Naive thymus-derived CD4-positive, alpha-beta T cell (primary cell): ENCODE measurements at regions of chr4 and their contacts with region 1.

Region 1: DNA sequence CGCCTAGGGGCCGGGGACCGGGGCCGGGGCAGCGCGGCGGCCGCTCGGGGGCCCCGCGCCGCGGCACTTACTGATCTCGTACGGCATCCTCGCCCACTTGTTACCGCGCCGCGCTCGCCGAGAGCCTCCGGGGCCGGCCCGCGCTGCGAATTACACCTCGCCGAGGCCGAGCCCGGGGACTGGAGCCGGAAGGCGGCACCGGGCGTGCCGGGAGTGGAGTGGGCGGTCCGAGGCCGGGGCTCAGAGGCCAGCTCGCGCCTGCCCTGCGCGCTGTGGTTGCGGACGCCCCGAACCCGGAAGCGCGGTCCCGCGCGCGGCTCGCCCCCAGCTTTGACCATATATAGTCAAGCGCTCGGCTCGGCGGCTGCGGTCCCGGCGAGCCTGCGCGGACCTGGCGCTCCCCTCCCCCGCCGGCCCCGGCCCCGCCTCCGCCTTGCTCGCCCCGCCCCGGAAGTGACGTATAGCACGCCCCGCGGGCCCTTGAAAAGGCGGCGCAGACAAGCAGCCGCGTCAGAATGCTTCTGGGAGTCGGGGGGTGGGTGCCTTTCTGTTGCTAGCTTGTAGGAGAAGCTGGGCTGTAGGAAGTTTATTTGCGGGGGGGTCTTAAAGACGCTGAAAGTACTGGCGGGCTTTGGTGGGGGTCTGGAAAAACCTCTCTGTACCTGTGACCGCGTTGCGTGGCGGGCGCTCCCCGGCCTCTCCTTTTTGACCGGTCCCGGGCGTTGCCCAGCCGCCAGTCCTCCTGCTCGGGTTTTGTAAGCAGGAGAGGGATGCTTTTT is at the start of gene WDR1:
- DNase-seq: peak; percentile 84 to 95 (median 91)
- ATAC-seq: peak; percentile 89
- H3K4me3 ChIP-seq: peak within 1 kb of the TSS; percentile 78
- H3K4me3 Mint-ChIP-seq: peak within 1 kb of the TSS; percentile 93 to 99 (median 97)
- H3K27ac ChIP-seq: peak within 1 kb of the TSS; percentile 97
- H3K27ac Mint-ChIP-seq: peak within 1 kb of the TSS; percentile 96 to 100 (median 99)
- H3K4me1 ChIP-seq: peaks cover 35 to 66% of the 10 kb centered on the region in 2 donors
- H3K4me1 Mint-ChIP-seq: peaks cover 60 to 92% (median 86%) of the 10 kb centered on the region in 7 donors
- H3K27me3 ChIP-seq: no peaks in the 10 kb centered on the region
- H3K27me3 Mint-ChIP-seq: no peaks in the 10 kb centered on the region
- total RNA-seq, gene WDR1: 242 to 470 (median 330) TPM

Region 2: DNA sequence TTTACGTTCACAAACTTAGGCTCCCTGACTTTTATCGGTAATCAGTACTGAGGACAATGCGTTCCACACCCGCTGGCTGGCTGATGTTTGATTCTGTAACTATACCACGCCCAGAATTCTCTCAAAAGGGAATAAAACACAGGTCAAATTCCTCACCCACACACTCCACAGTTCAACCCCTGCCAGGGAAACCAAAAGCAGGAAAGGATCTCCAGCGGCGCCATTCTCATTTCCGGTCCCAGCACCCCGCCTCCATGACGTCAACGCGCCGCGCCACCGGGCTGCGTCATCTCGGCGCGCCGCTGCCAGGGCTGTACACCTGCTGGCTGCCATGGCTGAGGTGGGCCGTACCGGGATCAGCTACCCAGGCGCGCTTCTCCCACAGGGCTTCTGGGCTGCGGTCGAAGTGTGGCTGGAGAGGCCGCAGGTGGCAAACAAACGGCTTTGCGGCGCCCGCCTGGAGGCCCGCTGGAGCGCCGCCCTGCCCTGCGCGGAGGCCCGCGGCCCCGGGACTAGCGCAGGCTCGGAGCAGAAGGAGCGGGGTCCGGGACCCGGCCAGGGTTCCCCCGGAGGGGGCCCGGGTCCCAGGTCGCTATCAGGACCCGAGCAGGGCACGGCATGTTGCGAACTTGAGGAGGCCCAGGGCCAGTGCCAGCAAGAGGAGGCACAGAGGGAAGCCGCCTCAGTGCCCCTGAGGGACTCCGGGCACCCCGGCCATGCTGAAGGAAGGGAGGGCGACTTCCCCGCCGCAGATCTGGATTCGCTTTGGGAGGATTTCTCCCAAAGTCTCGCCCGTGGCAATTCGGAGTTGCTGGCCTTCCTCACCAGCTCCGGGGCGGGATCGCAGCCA is 1676.1 kb before region 1 on chr4 and contains the starts of genes ACOX3 and TRMT44:
- CTCF ChIA-PET with region 1: no interaction called
- POLR2A ChIA-PET with region 1: no interaction called
- intact Hi-C with region 1: loop called in 1 of 2 experiments (anchors 2 kb)
- DNase-seq: peak; percentile 89 to 100 (median 97)
- ATAC-seq: peak; percentile 97
- H3K4me3 ChIP-seq: peak within 1 kb of the TSS; percentile 92
- H3K4me3 Mint-ChIP-seq: peak within 1 kb of the TSS; percentile 93 to 100 (median 96)
- H3K27ac ChIP-seq: peak within 1 kb of the TSS; percentile 89
- H3K27ac Mint-ChIP-seq: peak within 1 kb of the TSS; percentile 98 to 100 (median 99)
- H3K4me1 ChIP-seq: peaks cover 31 to 37% of the 10 kb centered on the region in 2 donors
- H3K4me1 Mint-ChIP-seq: peaks cover 62 to 89% (median 81%) of the 10 kb centered on the region in 7 donors
- H3K27me3 ChIP-seq: no peaks in the 10 kb centered on the region
- H3K27me3 Mint-ChIP-seq: peaks cover 0 to 2% (median 0%) of the 10 kb centered on the region in 5 donors
- total RNA-seq, gene ACOX3: 10.9 to 20.5 (median 14.8) TPM
- total RNA-seq, gene TRMT44: 28.5 to 33.7 (median 29.6) TPM

Region 3: DNA sequence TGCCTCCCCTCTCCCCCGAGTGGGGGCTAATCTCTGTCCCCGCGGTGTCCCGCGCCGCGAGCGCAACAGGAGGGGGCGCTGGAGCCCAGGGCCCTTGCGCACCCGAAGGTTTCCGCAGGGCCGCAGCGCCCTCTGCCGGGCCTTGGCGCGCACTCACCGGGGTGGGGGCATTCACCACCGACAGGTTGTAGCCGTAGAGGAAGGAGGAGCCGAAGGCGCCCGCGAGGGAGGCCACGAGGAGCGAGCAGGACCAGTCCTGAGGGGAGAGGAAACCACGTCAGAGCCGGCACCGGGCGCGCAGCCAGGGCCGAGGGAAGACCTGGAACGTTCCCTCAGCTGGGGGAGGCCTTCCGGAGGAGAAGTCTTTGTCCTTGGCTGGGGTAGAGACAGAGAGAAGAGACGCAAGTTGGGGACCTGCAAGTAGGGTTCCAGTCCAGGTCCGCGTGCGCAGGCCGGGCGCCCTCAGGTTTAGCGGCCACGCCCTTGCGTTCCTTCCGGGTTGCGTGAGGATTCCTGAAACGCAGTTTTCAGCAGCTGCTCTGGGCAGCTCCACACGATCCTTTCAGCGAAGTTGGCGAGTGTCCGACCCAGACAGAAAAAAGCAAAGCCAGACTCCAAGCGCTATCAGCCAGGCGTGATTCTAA is 97.8 kb before region 1 on chr4:
- CTCF ChIA-PET with region 1: no interaction called
- POLR2A ChIA-PET with region 1: interaction called, 7 read pairs
- intact Hi-C with region 1: loop called (anchors 1 kb)
- DNase-seq: peak; percentile 92 to 96 (median 95)
- ATAC-seq: peak; percentile 99
- H3K4me3 ChIP-seq: peak overlapping the region; percentile 75
- H3K4me3 Mint-ChIP-seq: peak overlapping the region; percentile 83 to 96 (median 90)
- H3K27ac ChIP-seq: peak overlapping the region; percentile 81
- H3K27ac Mint-ChIP-seq: peak overlapping the region; percentile 82 to 98 (median 97)
- H3K4me1 ChIP-seq: peaks cover 6 to 10% of the 10 kb centered on the region in 2 donors
- H3K4me1 Mint-ChIP-seq: peaks cover 8 to 25% (median 13%) of the 10 kb centered on the region in 7 donors
- H3K27me3 ChIP-seq: no peaks in the 10 kb centered on the region
- H3K27me3 Mint-ChIP-seq: peaks cover 0 to under 1% (median 0%) of the 10 kb centered on the region in 5 donors

Region 4: GRCh38 chr4:10106421-10107039 is 10.2 kb before region 1 on chr4:
- CTCF ChIA-PET with region 1: interaction called, 3 read pairs
- POLR2A ChIA-PET with region 1: interaction called, 341 read pairs
- intact Hi-C with region 1: loop called (anchors 1 kb)
- DNase-seq: peak in 2 of 9 donors; percentile 59 to 69
- ATAC-seq: peak; percentile 83
- H3K4me3 ChIP-seq: peak overlapping the region; percentile 27
- H3K4me3 Mint-ChIP-seq: peak overlapping the region; percentile 29 to 97 (median 70)
- H3K27ac ChIP-seq: peak overlapping the region; percentile 66
- H3K27ac Mint-ChIP-seq: peak overlapping the region; percentile 50 to 93 (median 89)
- H3K4me1 ChIP-seq: peaks cover 79 to 94% of the 10 kb centered on the region in 2 donors
- H3K4me1 Mint-ChIP-seq: peaks cover 88 to 100% (median 98%) of the 10 kb centered on the region in 7 donors
- H3K27me3 ChIP-seq: no peaks in the 10 kb centered on the region
- H3K27me3 Mint-ChIP-seq: no peaks in the 10 kb centered on the region

Region 5: GRCh38 chr4:10164877-10165283 is 48.1 kb after region 1 on chr4:
- CTCF ChIA-PET with region 1: interaction called, 7 read pairs
- POLR2A ChIA-PET with region 1: interaction called, 97 read pairs
- intact Hi-C with region 1: no loop called
- DNase-seq: no peak
- ATAC-seq: no peak
- H3K4me3 ChIP-seq: no peak overlapping the region
- H3K4me3 Mint-ChIP-seq: no peak overlapping the region
- H3K27ac ChIP-seq: no peak overlapping the region
- H3K27ac Mint-ChIP-seq: peak overlapping the region in 1 of 9 donors; percentile 62
- H3K4me1 ChIP-seq: peaks cover 8 to 30% of the 10 kb centered on the region in 2 donors
- H3K4me1 Mint-ChIP-seq: peaks cover 14 to 41% (median 32%) of the 10 kb centered on the region in 7 donors
- H3K27me3 ChIP-seq: no peaks in the 10 kb centered on the region
- H3K27me3 Mint-ChIP-seq: no peaks in the 10 kb centered on the region

Region 6: DNA sequence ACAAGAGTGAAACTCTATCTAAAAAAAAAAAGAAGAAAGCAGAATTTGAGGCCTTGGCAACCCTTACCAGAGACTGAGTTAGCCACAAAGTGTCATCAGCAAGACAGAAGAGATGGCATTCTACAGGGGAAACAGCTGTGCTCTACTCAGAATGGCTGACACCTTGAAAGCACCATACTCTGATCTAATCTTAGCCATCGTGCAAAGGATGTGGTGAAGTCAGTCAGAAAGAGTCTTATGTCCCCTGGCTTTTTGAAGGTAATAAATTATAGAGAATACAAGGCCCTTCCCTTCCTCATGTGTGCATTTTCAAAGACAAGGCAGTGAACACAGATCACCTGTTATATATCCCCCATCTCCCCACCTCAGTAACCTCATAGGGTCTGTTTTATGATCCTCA is 554.6 kb after region 1 on chr4:
- CTCF ChIA-PET with region 1: no interaction called
- POLR2A ChIA-PET with region 1: no interaction called
- intact Hi-C with region 1: loop called in 1 of 2 experiments (anchors 5 kb)
- DNase-seq: peak in 8 of 9 donors; percentile 28 to 89 (median 80)
- ATAC-seq: peak; percentile 95
- H3K4me3 ChIP-seq: no peak overlapping the region
- H3K4me3 Mint-ChIP-seq: peak overlapping the region in 8 of 10 donors; percentile 27 to 67 (median 43)
- H3K27ac ChIP-seq: peak overlapping the region; percentile 74
- H3K27ac Mint-ChIP-seq: peak overlapping the region; percentile 81 to 94 (median 89)
- H3K4me1 ChIP-seq: peaks cover 0 to 27% of the 10 kb centered on the region in 2 donors
- H3K4me1 Mint-ChIP-seq: peaks cover 3 to 42% (median 29%) of the 10 kb centered on the region in 7 donors
- H3K27me3 ChIP-seq: no peaks in the 10 kb centered on the region
- H3K27me3 Mint-ChIP-seq: no peaks in the 10 kb centered on the region